Breast epithelium (tissue), 4 donors: ENCODE measurements at regions of chr2 and their contacts with region 1.

Region 1: DNA sequence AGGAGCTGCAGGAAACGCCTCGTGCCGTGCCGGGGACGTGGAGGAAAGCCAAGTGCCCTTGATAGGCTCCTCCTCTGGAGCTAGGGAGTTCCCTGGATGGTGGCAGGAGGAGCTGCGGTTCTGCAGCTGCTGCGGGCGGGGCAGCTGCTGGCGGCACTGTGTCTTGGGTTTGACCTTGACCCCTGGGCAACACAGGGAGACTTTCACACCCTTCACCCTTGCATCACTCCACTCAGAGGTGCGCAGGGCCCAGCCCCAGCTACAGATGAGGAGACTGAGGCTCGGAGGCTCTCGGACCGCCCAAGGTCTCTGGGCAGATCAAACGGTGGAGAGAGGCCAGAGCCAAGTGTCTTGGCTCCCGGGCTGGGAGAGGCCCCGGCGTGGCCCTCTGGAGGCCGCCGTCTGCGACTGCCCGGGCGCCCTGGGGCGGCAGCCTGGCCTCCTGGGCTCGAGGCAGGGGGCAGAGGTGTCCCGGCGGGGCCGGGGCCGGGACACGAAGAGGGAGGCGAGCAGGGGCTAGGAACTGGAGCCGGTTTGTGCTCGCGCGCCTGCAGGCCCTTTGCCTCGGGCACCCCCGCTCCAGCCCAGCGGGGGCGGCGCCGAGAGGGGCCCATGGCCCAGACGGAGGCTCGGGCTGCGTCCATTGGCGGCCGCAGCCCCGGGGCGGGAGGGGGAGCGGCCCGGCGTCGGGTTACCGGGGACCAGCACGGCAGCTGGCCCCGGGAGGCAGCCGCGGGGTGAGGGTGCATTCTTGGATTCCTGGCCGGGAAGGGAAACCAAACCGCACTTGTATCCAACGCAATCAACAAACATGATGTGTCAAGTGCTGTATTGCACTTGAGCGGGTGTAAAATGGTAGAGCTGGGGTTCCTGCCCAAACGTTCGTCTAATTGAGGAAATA is 129.6 kb upstream of the SLC1A4 start:
- DNase-seq: peak; percentile 86 to 87
- H3K4me3 ChIP-seq: peak overlapping the region; percentile 43 to 68 (median 54)
- H3K27ac ChIP-seq: peak overlapping the region; percentile 92 to 93
- H3K4me1 ChIP-seq: peaks cover 16 to 28% of the 10 kb centered on the region in 2 donors
- H3K27me3 ChIP-seq: no peaks in the 10 kb centered on the region
- CTCF ChIP-seq: peak in 1 of 3 donors; percentile 27
- POLR2A ChIP-seq: no peak

Region 2: DNA sequence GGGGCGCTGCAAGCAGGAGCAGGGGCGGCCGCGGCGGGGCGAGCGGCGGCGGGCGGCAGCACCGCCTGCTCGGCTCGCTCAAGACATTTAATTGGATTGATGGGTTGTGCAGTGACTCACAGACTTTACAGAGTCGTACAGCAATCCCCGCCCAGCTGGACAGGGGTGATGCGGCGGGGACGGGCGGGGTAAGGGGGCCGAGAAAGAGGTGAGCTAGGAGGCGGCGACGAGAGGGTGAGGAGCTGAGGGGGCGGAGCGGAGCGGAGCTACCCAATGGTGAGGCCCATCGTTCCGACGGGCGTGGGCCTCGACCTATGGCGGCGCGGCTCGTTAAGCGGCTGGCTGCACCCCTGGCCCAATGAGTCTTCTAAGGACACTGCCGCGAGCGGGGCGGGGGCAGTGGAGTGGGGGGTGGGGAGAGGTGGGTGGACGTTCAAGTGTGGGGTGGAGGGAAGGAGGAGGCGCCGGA is 108.7 kb before region 1 on chr2:
- intact Hi-C with region 1: loop called (anchors 10 kb)
- DNase-seq: peak; percentile 98 to 99
- H3K4me3 ChIP-seq: peak overlapping the region; percentile 71 to 96 (median 80)
- H3K27ac ChIP-seq: peak overlapping the region; percentile 94 to 100
- H3K4me1 ChIP-seq: peaks cover 0 to 5% of the 10 kb centered on the region in 2 donors
- H3K27me3 ChIP-seq: no peaks in the 10 kb centered on the region
- CTCF ChIP-seq: no peak
- POLR2A ChIP-seq: peak; percentile 89

Region 3: GRCh38 chr2:64819774-64820696 is 39.5 kb before region 1 on chr2:
- intact Hi-C with region 1: no loop called
- DNase-seq: no peak
- H3K4me3 ChIP-seq: no peak overlapping the region
- H3K27ac ChIP-seq: peak overlapping the region in 1 of 2 donors; percentile 64
- H3K4me1 ChIP-seq: no peaks in the 10 kb centered on the region
- H3K27me3 ChIP-seq: no peaks in the 10 kb centered on the region
- CTCF ChIP-seq: no peak
- POLR2A ChIP-seq: no peak

Region 4: GRCh38 chr2:64975232-64975821 is 115.8 kb after region 1 on chr2:
- intact Hi-C with region 1: no loop called
- DNase-seq: peak; percentile 66 to 84
- H3K4me3 ChIP-seq: no peak overlapping the region
- H3K27ac ChIP-seq: no peak overlapping the region
- H3K4me1 ChIP-seq: no peaks in the 10 kb centered on the region
- H3K27me3 ChIP-seq: no peaks in the 10 kb centered on the region
- CTCF ChIP-seq: no peak
- POLR2A ChIP-seq: no peak